Ascending aorta (tissue), 2 donors: ENCODE measurements at regions of chr5 and their contacts with region 1.

Region 1: GRCh38 chr5:138352071-138352721 is at the start of gene KDM3B:
- DNase-seq: peak; percentile 60 to 94
- H3K4me3 ChIP-seq: peak within 1 kb of the TSS; percentile 96 to 100
- H3K27ac ChIP-seq: peak within 1 kb of the TSS; percentile 89 to 98
- H3K4me1 ChIP-seq: peaks cover 4 to 38% of the 10 kb centered on the region in 2 donors
- H3K27me3 ChIP-seq: no peaks in the 10 kb centered on the region
- CTCF ChIP-seq: peak; percentile 96 to 100 (median 96)
- total RNA-seq, gene KDM3B: 33.4 TPM

Region 2: GRCh38 chr5:138178516-138179276 is 173.5 kb before region 1 on chr5 and contains the starts of genes BRD8 and KIF20A:
- intact Hi-C with region 1: loop called (anchors 5 kb)
- DNase-seq: peak; percentile 89 to 98
- H3K4me3 ChIP-seq: peak within 1 kb of the TSS; percentile 82 to 94
- H3K27ac ChIP-seq: peak within 1 kb of the TSS; percentile 75 to 79
- H3K4me1 ChIP-seq: peaks cover 0 to 9% of the 10 kb centered on the region in 2 donors
- H3K27me3 ChIP-seq: no peaks in the 10 kb centered on the region
- CTCF ChIP-seq: no peak
- total RNA-seq, gene BRD8: 18.8 TPM
- total RNA-seq, gene KIF20A: not detected

Region 3: DNA sequence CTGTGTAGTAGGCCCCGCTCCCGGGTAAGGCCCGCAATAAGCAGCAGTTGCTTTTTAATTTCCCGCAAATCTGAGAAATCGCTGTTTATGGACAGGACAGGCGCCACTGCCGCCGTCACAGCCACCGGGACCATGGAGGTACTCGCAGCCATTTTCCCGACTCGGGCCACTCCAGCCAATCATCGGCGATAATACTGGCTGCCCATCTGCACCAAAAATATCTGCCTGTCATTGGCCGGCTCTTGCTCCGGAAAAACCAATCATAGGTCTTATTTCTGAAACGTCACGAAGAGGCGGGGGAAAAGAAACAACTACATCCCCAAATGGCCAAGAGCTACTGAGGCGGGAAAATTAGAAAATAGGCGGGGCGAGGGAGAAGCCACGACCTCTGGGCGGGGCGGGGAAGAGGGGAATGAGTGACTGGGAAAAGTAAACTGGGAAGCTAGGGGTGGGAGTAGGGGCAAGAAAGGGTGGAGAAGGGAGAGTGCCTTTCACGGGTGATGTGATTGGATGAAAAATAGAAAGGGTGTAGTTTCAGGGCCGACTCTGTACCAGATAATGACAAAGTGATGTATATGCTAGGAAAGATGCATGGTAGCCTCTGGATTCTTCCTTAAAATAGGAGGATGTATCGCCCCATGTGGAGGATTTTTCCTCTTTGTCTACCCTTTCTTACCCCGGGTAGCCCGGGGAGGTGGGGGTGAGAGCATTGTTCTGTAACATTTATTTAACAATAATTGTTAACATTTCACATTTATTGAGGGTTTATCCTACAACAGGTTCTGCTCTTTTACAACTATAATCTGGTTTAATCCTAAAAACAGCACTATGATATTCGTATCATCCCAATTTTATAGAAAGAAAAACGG is 138.8 kb before region 1 on chr5 and contains the start of gene CDC23:
- intact Hi-C with region 1: loop called (anchors 5 kb)
- DNase-seq: peak; percentile 85 to 97
- H3K4me3 ChIP-seq: peak within 1 kb of the TSS; percentile 73 to 95
- H3K27ac ChIP-seq: peak within 1 kb of the TSS; percentile 60 to 72
- H3K4me1 ChIP-seq: peaks cover 0 to 8% of the 10 kb centered on the region in 2 donors
- H3K27me3 ChIP-seq: no peaks in the 10 kb centered on the region
- CTCF ChIP-seq: no peak
- total RNA-seq, gene CDC23: 13.2 TPM

Region 4: GRCh38 chr5:138337685-138338410 is 14.3 kb before region 1 on chr5 and contains the start of gene FAM53C:
- intact Hi-C with region 1: loop called (anchors 1 kb)
- DNase-seq: peak; percentile 69 to 94
- H3K4me3 ChIP-seq: peak within 1 kb of the TSS; percentile 87 to 93
- H3K27ac ChIP-seq: peak within 1 kb of the TSS; percentile 94 to 95
- H3K4me1 ChIP-seq: peaks cover 0 to 8% of the 10 kb centered on the region in 2 donors
- H3K27me3 ChIP-seq: no peaks in the 10 kb centered on the region
- CTCF ChIP-seq: no peak
- total RNA-seq, gene FAM53C: 40.0 TPM

Region 5: DNA sequence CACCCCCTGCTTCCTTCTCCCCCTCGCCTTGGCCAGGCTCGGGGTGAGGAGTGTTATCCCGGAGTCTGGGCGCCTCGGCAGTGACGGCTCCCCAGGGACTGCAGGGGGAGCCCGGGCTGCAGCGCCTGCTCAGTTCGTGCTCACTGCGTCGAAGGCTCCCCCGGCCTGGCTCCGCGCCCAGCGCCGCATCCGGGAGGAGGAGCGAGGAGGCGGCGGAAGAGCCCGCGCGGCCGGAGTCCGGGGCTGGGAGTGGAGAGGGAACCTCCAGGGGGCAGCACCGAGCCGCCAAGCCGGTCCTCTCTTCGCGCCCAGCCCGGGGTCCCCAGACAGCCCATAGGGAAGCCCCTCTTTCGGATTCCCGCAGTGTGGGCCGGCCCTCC is 111.8 kb after region 1 on chr5:
- intact Hi-C with region 1: loop called (anchors 1 kb)
- DNase-seq: peak; percentile 71 to 96
- H3K4me3 ChIP-seq: peak overlapping the region; percentile 65 to 91
- H3K27ac ChIP-seq: peak overlapping the region; percentile 98 to 99
- H3K4me1 ChIP-seq: peaks cover 9 to 27% of the 10 kb centered on the region in 2 donors
- H3K27me3 ChIP-seq: no peaks in the 10 kb centered on the region
- CTCF ChIP-seq: peak; percentile 90 to 96 (median 95)